GM10248 (cell line): ENCODE measurements at regions of chr20 and their contacts with region 1.

Region 1: DNA sequence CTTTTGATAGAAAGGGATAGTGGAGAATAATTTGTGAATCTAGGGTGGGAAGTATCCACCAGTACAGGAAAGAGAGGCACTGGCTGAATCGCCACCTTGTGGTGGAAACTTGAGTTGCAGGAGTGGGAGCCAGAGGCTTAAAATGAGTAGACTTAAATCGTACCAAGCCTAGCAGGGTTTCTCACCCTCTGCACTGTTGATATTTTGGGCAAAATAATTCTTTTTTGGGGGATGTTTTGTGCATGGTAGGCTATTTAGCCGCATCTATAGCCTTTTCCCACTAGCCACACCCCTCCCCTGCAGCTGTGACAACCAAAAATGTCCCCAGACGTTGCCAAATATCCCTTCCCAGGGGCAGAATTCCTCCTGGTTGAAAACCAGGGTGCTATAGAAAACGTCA is 119.1 kb downstream of the DHX35 start:
- DNase-seq: peak; percentile 80
- CTCF ChIP-seq: peak; percentile 86

Region 2: GRCh38 chr20:39057911-39058310 is 23.3 kb before region 1 on chr20:
- CTCF ChIA-PET with region 1: interaction called, 81 read pairs
- POLR2A ChIA-PET with region 1: no interaction called
- DNase-seq: no peak
- CTCF ChIP-seq: no peak

Region 3: GRCh38 chr20:39070484-39071231 is 10.6 kb before region 1 on chr20:
- CTCF ChIA-PET with region 1: interaction called, 78 read pairs
- POLR2A ChIA-PET with region 1: interaction called, 4 read pairs
- DNase-seq: no peak
- CTCF ChIP-seq: no peak

Region 4: DNA sequence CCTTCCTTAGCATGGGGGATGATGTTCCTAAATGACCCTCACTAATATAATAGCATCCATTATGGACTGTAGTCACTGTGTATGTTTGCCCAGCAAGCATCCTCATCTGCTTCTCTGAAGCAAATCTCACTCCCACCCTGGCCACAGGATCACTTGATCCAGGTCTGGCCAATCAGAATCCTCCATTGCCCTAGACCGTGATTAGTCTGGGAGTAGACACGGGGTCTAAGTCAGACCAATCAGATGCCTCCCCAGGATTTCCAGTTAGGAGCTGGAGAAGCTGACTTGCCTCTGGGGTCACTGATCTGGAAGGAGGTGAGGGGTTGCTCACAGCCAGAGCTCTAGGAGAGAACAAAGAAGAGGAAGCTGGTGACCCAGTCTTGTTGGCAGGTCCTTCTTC is 34.8 kb after region 1 on chr20:
- CTCF ChIA-PET with region 1: no interaction called
- POLR2A ChIA-PET with region 1: no interaction called
- DNase-seq: no peak
- CTCF ChIP-seq: no peak

Region 5: DNA sequence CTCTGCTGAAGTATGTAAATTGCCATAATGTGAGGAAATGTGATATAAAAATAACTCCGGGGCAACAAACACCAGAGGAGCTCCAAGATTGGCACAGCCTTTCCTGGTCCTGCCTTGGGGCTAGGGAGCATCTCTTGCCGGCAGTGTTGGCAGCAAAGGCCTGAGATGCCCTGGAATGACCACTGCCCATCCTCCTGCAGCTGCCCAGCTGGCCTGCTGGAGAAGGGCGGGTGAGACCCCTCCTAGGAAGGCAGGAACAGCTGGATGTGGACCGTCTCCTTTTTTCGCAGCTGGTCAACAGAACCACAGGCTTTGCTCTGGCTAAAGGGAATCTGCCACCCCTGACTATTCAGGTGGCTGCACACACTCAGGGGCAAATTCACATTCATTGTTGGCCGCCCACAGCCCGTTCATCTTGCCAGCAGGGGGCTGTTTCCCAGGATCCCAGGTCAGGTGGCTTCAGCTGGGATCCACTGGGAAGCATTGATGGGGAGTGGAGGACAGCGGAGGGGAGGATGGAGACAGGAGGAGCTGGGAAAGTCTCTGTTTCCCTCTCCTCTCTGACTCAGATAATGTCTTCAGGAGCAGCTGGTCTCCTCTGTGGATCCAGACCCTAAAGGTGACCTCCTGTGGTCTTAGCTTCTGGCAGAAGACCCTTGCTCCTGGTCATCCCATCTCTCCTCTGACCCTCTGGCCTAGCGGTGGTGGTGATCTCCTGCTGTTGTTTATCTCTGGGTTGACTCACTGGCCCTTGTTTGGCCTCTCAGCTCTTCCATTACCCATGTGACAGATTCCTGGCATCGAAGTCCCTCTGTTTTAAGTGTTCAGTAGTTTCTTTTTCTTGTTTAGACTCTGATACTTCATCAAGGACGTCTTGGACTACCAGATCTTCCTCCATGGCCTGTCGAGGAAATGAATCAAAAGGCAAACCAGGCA is 217.6 kb after region 1 on chr20:
- CTCF ChIA-PET with region 1: no interaction called
- POLR2A ChIA-PET with region 1: no interaction called
- DNase-seq: no peak
- CTCF ChIP-seq: no peak